Activated CD4-positive, alpha-beta T cell treated with anti-CD3 and anti-CD28 coated beads, Interleukin-2, amount 10 ng/mL, durations not matched to agents 7 days and 5 days (primary cell): ENCODE measurements at regions of chr3 and their contacts with region 1.

Region 1: GRCh38 chr3:170811928-170812591 is 57.9 kb downstream of the RPL22L1 start:
- DNase-seq: peak; percentile 77
- H3K4me3 Mint-ChIP-seq: no peak overlapping the region
- H3K27ac Mint-ChIP-seq: no peak overlapping the region
- H3K4me1 Mint-ChIP-seq: peaks cover 5% of the 10 kb centered on the region
- H3K27me3 Mint-ChIP-seq: peaks cover 3% of the 10 kb centered on the region

Region 2: GRCh38 chr3:170414202-170414663 is 397.8 kb before region 1 on chr3:
- CTCF ChIA-PET with region 1: interaction called, 18 read pairs
- POLR2A ChIA-PET with region 1: no interaction called
- DNase-seq: peak; percentile 56
- H3K4me3 Mint-ChIP-seq: no peak overlapping the region
- H3K27ac Mint-ChIP-seq: no peak overlapping the region
- H3K4me1 Mint-ChIP-seq: peaks cover 6% of the 10 kb centered on the region
- H3K27me3 Mint-ChIP-seq: peaks cover 27% of the 10 kb centered on the region

Region 3: GRCh38 chr3:170563712-170564423 is 248.2 kb before region 1 on chr3:
- CTCF ChIA-PET with region 1: no interaction called
- POLR2A ChIA-PET with region 1: no interaction called
- DNase-seq: peak; percentile 14
- H3K4me3 Mint-ChIP-seq: no peak overlapping the region
- H3K27ac Mint-ChIP-seq: no peak overlapping the region
- H3K4me1 Mint-ChIP-seq: peaks cover 18% of the 10 kb centered on the region
- H3K27me3 Mint-ChIP-seq: peaks cover 16% of the 10 kb centered on the region